ENCODE measurements at regions of chr16 and their contacts with region 1.

Region 1: DNA sequence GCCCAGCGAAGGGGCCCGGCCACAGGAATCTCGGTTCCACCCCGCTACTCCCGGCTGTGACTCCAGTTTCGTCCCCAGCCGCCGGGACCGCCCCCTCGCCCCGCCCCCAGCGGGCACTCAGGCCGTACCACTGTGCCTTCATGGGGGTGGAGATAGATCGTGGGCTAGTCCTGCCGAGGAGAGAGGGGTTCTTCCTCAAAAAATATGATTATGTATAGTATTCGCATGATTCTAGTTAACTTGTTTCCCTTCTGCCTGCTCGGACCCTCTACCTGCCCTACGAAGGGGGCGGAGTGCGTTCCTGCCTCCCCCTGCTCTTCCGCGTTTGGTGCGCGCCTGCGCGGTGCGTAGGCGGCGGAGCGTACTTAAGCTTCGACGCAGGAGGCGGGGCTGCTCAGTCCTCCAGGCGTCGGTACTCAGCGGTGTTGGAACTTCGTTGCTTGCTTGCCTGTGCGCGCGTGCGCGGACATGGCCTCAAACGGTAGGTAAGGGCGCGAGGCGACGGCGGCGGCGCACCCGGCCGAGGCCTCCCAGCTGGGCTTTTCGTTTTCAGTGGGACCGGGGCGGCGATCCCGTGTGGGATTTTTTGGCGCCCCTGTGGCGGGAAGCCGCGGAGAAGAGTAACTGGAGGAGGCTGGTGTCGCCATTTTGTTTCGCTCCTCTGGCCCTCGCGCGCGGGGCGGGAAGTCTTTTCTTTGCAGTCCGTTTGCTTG is at the start of gene FUS:
- DNase-seq: peak; percentile 92
- H3K4me3 Mint-ChIP-seq: peak within 1 kb of the TSS; percentile 99
- H3K27ac Mint-ChIP-seq: peak within 1 kb of the TSS; percentile 100
- H3K4me1 Mint-ChIP-seq: peaks cover 51% of the 10 kb centered on the region
- H3K27me3 Mint-ChIP-seq: no peaks in the 10 kb centered on the region
- total RNA-seq, gene FUS: 424 to 435 TPM

Region 2: GRCh38 chr16:30650369-30651123 is 529.4 kb before region 1 on chr16 and contains the start of gene PRR14:
- CTCF ChIA-PET with region 1: no interaction called
- intact Hi-C with region 1: loop called (anchors 2 kb)
- DNase-seq: peak; percentile 100
- H3K4me3 Mint-ChIP-seq: peak within 1 kb of the TSS; percentile 85
- H3K27ac Mint-ChIP-seq: peak within 1 kb of the TSS; percentile 91
- H3K4me1 Mint-ChIP-seq: peaks cover 22% of the 10 kb centered on the region
- H3K27me3 Mint-ChIP-seq: no peaks in the 10 kb centered on the region
- total RNA-seq, gene PRR14: 50.6 to 52.4 TPM

Region 3: GRCh38 chr16:30844671-30845449 is 335.0 kb before region 1 on chr16:
- CTCF ChIA-PET with region 1: no interaction called
- intact Hi-C with region 1: no loop called
- DNase-seq: peak; percentile 93
- H3K4me3 Mint-ChIP-seq: no peak overlapping the region
- H3K27ac Mint-ChIP-seq: no peak overlapping the region
- H3K4me1 Mint-ChIP-seq: peaks cover 8% of the 10 kb centered on the region
- H3K27me3 Mint-ChIP-seq: no peaks in the 10 kb centered on the region

Region 4: DNA sequence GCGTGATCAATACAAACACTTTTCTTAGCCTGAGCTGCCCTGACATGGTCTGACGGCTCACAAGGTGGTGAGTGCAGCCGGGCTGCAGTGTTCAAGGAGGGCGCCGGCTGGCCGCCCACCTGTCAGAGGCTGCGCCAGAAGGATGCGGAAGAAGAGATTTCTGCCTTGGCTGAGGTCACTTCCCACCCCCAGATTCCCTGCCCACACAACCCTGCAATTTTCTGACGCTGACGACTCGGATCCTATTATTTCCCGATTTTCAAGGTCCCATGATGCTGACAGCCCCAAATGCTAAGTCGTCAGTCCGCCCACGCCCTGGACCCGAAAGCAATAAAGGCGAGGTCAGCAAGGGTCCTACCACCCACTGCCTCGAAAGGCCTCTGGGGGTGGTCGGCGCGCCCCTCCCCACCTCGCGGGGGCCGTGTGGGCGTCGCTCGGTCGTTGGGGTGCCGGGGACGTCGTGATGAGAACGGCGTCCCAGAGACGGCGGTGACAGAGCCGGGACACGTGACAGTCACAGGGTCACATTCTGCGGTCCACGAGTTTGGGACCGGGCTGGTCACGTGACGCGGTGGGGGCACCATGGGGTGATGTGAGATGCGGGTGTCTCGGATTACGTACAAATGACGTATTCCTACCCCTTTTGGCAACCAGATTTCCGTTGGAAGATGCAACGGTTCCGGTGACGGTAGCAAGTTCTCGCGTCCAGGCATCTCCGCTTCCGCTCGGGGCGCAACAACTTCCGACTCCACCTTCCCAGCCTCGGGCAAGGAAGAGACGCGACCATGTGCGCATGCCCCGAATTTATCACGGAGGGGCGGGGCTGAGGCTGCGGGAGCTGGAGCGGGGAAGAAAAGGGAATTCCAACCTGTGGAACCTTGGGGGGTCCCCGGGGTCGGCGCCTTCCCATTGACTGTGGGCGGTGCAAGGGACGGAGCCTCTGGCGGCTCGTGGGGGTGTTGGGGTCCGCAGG is 146.9 kb before region 1 on chr16 and contains the start of gene STX4:
- CTCF ChIA-PET with region 1: no interaction called
- intact Hi-C with region 1: loop called (anchors 1 kb)
- DNase-seq: peak; percentile 99
- H3K4me3 Mint-ChIP-seq: peak within 1 kb of the TSS; percentile 96
- H3K27ac Mint-ChIP-seq: peak within 1 kb of the TSS; percentile 93
- H3K4me1 Mint-ChIP-seq: peaks cover 22% of the 10 kb centered on the region
- H3K27me3 Mint-ChIP-seq: no peaks in the 10 kb centered on the region
- total RNA-seq, gene STX4: 32.9 to 38.0 TPM

Region 5: DNA sequence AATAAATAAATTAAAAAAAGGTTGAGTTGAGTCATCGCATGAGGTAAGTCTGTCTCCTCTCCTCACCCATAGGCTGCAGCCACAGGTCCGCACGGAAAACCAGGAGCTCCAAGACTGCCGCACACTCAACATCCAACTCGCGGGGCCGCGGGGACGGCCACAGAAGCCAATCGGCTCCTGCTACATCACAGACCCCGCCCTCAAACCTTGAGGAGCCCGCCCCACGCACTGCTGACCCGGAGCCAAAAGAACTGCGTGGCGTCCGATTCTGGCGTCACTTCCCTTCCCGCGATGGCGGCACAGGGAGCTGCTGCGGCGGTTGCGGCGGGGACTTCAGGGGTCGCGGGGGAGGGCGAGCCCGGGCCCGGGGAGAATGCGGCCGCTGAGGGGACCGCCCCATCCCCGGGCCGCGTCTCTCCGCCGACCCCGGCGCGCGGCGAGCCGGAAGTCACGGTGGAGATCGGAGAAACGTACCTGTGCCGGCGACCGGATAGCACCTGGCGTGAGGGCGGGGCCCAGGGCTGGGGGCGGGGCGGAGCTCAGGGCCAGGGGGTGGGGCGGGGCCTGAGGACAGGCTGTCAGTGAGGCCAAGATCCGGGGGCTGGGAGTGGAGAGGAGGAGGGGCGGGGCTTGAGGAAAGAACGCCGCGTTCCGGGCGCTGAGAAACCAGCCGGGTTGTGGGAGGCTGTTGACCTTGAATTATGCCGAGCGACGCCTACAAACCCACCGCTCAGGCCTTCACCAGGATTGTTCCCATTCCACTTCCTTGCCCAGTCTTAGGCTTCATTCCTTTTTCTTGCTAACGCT is 62.3 kb before region 1 on chr16 and contains the start of gene KAT8:
- CTCF ChIA-PET with region 1: interaction called, 3 read pairs
- intact Hi-C with region 1: loop called (anchors 1 kb)
- DNase-seq: peak; percentile 99
- H3K4me3 Mint-ChIP-seq: peak within 1 kb of the TSS; percentile 82
- H3K27ac Mint-ChIP-seq: peak within 1 kb of the TSS; percentile 70
- H3K4me1 Mint-ChIP-seq: peaks cover 28% of the 10 kb centered on the region
- H3K27me3 Mint-ChIP-seq: no peaks in the 10 kb centered on the region
- total RNA-seq, gene KAT8: 58.1 to 64.5 TPM

Region 6: DNA sequence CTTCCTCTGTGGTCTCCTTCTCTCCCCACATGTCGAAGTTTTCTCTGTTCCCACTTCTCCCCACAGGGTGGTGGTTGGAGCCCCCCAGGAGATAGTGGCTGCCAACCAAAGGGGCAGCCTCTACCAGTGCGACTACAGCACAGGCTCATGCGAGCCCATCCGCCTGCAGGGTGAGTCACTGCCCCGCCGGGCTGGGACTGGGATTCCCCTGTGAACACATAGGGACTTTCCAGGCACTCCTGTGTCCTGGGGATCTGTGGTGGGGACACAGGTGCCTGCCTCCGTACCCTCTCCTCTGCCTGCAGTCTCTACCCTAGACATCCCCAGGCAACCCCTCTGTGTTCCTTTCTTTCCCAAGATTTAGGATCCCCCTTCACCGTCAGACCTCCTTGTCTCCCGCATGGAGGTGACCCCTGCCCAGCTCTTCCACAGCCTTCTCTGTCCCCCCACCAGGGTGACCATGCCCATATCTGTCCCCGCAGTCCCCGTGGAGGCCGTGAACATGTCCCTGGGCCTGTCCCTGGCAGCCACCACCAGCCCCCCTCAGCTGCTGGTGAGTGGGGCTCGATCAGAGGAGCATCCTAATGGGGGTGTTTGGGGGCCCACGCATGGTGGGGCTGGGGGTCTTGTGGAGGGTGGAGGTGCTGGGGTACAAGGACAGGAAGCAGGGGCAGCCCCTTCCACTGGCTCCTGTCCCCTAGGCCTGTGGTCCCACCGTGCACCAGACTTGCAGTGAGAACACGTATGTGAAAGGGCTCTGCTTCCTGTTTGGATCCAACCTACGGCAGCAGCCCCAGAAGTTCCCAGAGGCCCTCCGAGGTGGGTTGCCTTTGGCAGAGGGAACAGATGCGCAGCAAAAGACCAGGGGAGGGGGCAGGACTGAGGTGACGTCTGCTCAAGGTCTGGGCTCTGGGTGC is 85.7 kb after region 1 on chr16:
- CTCF ChIA-PET with region 1: no interaction called
- intact Hi-C with region 1: loop called (anchors 1 kb)
- DNase-seq: peak; percentile 92
- H3K4me3 Mint-ChIP-seq: no peak overlapping the region
- H3K27ac Mint-ChIP-seq: peak overlapping the region; percentile 79
- H3K4me1 Mint-ChIP-seq: peaks cover 31% of the 10 kb centered on the region
- H3K27me3 Mint-ChIP-seq: peaks cover under 1% of the 10 kb centered on the region

Region 7: GRCh38 chr16:31700526-31701388 is 520.9 kb after region 1 on chr16:
- CTCF ChIA-PET with region 1: no interaction called
- intact Hi-C with region 1: loop called (anchors 5 kb)
- DNase-seq: peak; percentile 93
- H3K4me3 Mint-ChIP-seq: peak overlapping the region; percentile 85
- H3K27ac Mint-ChIP-seq: peak overlapping the region; percentile 95
- H3K4me1 Mint-ChIP-seq: peaks cover 27% of the 10 kb centered on the region
- H3K27me3 Mint-ChIP-seq: no peaks in the 10 kb centered on the region